Mammary epithelial cell (primary cell): ENCODE measurements at regions of chr13 and their contacts with region 1.

Region 1: DNA sequence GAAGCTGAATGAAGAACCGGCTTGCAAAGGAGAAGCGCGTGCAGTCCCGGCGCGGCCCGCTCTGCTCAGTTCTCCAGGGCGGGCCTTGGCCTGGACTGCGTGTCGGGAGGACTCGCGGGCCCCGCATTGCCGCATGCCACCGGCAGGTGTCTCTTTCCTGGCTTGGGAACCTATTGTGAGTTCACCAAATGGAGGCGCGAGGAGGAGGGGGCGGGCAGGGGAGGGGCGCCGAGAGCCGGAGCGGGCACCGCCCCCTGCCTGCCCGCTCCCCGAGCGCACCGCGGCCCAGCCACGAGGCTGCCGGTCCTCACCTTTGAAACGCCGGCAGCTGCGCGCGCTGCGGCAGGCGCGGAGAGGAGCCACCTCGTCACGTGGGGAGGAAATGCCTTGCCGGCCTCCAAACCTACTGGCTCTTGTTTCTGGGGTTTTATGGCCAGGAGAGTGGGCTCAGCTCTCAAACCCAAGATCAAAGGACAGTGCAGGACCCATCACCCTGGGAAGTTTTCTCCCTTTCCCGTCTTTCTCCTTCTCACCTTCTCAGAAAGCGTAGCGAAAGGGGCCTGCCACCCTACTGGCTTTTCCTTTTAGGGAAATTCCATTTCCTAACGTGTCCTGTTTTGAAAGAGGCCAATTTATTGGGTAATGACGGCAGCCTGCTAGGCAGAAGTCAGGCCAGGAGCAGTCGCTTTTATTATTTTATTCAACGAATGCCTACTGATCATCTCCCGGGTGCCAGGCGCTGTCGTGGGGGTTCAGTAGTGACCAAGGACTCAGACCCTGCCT is 13.8 kb upstream of the UBE2L5 start:
- DNase-seq: peak; percentile 73
- H3K4me3 ChIP-seq: peak overlapping the region in 1 of 3 experiments; percentile 24
- H3K27ac ChIP-seq: peak overlapping the region; percentile 23
- H3K4me1 ChIP-seq: peaks cover 17% of the 10 kb centered on the region
- H3K27me3 ChIP-seq: no peaks in the 10 kb centered on the region
- CTCF ChIP-seq: peak; percentile 36 to 75

Region 2: GRCh38 chr13:30395192-30396084 is 13.1 kb before region 1 on chr13:
- CTCF ChIA-PET with region 1: interaction called, 13 read pairs
- dilution Hi-C with region 1: no loop called
- in situ Hi-C with region 1: no loop called
- intact Hi-C with region 1: no loop called
- DNase-seq: peak; percentile 87
- H3K4me3 ChIP-seq: peak overlapping the region; percentile 54 to 69 (median 56)
- H3K27ac ChIP-seq: peak overlapping the region; percentile 81
- H3K4me1 ChIP-seq: peaks cover 9% of the 10 kb centered on the region
- H3K27me3 ChIP-seq: no peaks in the 10 kb centered on the region
- CTCF ChIP-seq: no peak

Region 3: DNA sequence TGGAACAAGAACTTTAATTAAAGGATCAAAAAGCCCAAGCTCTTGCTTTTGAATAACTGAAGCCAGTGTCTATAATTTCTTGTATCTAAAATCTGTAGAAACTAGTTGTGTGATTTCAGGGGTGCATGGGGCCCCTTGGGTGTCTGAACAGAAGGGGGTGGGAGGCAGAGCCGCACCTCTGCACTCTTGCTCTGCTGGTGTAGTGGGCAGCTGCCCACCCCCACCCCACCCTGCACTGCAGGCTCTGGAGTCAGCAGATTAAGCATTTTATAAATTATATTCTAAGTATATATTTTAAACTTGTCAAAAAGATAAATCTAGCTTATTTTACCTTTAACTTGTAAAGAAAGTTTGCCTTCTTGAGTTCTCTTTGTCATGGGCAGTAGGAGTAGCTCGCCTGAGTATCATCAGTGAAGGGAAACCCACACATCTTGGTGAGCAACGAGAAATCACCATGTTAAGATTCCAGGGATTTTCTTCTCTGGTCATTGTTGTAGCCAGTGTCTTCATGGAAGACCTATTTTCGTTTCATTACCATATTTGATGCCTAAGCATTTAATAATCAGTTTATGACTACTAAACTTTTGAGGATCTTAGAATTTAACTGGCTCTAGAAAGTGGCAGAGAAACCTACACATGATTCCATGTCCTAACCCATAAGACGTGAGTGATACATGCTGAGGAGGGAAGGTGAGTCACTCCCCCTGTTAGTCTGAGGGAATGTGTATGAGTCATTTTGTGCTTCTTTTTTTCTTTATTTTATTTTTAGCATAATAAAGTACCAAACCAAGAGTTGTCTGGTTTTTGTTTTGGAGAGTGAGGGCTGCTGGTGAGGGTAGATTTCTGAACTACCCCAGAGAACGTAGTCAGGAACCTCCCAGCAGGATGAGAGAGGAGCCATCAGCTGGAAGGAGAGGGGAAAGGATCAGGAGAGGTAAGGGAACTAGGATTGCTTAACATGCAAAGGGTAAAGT is 21.5 kb after region 1 on chr13:
- CTCF ChIA-PET with region 1: no interaction called
- dilution Hi-C with region 1: no loop called
- in situ Hi-C with region 1: no loop called
- intact Hi-C with region 1: loop called (anchors 2 kb)
- DNase-seq: peak; percentile 91
- H3K4me3 ChIP-seq: peak overlapping the region in 1 of 3 experiments; percentile 18
- H3K27ac ChIP-seq: peak overlapping the region; percentile 71
- H3K4me1 ChIP-seq: peaks cover 35% of the 10 kb centered on the region
- H3K27me3 ChIP-seq: no peaks in the 10 kb centered on the region
- CTCF ChIP-seq: no peak

Region 4: DNA sequence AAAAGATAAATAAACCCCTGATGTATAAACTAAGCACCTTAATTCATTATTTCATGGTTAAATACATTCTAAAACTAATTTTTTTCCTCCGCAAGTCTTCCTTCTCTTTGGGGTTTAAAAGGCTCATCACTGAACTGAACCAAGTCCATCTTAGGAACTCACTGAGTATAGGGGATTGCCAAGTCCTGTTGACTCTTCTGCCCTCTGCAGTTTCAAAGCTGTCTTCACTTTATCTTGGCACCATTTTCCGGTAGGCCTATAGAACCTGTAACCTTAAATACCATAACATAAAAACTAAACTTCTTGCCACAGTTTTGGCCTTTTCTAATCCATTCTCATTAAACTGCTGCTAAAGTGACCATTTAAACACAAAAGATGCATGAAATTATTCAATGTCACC is 142.7 kb after region 1 on chr13:
- CTCF ChIA-PET with region 1: no interaction called
- dilution Hi-C with region 1: no loop called
- in situ Hi-C with region 1: no loop called
- intact Hi-C with region 1: loop called (anchors 5 kb)
- DNase-seq: peak; percentile 24
- H3K4me3 ChIP-seq: no peak overlapping the region
- H3K27ac ChIP-seq: no peak overlapping the region
- H3K4me1 ChIP-seq: no peaks in the 10 kb centered on the region
- H3K27me3 ChIP-seq: no peaks in the 10 kb centered on the region
- CTCF ChIP-seq: peak; percentile 28 to 56

Region 5: GRCh38 chr13:30572859-30573275 is 164.4 kb after region 1 on chr13:
- CTCF ChIA-PET with region 1: no interaction called
- dilution Hi-C with region 1: no loop called
- in situ Hi-C with region 1: no loop called
- intact Hi-C with region 1: loop called (anchors 5 kb)
- DNase-seq: peak; percentile 37
- H3K4me3 ChIP-seq: peak overlapping the region; percentile 31 to 53 (median 46)
- H3K27ac ChIP-seq: peak overlapping the region; percentile 71
- H3K4me1 ChIP-seq: peaks cover 35% of the 10 kb centered on the region
- H3K27me3 ChIP-seq: no peaks in the 10 kb centered on the region
- CTCF ChIP-seq: peak in 1 of 2 donors; percentile 33